ENCODE measurements at regions of chr16 and their contacts with region 1.

Region 1: DNA sequence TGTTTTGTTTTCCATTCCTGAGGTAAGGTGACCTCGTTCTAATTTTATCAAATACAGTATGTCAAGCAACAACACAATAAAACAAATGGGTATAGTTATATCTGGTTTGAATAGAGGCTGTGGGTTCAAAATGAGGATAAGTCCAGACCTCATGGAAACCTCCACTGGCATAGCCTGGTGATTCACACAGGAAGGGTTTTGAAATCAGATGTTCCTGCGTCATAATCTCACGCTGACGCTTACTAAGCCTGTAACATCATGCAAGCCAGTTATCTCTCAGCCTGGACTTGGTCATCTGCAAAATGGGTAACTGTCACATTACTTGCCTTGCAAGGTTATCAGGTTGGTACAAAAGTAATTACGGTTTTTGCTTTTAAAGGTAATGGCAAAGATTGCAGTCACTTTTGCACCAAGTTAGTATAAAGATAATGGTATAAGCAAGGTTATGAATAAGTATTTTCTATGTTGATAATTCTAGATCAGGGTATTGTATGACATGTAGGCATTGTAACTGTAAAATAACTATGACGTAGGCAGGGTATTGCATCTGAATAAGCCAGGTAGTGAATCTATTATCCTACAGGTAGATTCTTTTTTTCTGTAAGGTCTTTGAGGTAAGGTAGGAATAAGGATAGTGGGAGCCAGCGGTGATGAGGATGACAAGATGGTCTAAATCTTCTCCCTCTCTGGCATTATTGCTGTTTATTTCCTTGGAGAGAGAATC is 1056.5 kb upstream of the EEF2KMT start:
- DNase-seq: no peak
- ATAC-seq: no peak
- H3K4me3 ChIP-seq: no peak overlapping the region
- H3K27ac ChIP-seq: no peak overlapping the region
- H3K4me1 ChIP-seq: no peaks in the 10 kb centered on the region
- H3K27me3 ChIP-seq: no peaks in the 10 kb centered on the region
- CTCF ChIP-seq: no peak
- POLR2A ChIP-seq: no peak
- RAD21 ChIP-seq: no peak

Region 2: DNA sequence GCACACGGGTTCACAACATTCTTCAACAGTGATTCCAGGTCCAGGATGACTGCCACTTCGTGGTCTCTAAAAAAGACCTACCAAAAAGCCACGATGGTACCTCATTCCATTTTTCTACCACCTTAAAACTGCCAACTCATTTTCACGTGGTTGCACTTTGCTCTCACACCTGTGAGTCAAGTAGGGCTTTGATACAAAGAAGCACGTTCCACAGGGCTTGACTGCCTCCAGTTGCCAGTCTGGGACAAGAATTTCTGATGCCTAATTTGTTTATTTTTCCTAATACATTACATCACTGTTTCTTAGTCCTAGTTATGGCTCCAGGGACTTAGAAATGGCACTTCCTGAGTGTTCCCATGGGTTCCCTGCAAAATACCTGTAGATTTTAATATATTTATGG is 144.9 kb before region 1 on chr16:
- CTCF ChIA-PET with region 1: no interaction called
- POLR2A ChIA-PET with region 1: no interaction called
- dilution Hi-C with region 1: no loop called
- in situ Hi-C with region 1: no loop called
- intact Hi-C with region 1: no loop called
- DNase-seq: no peak
- ATAC-seq: no peak
- H3K4me3 ChIP-seq: no peak overlapping the region
- H3K27ac ChIP-seq: no peak overlapping the region
- H3K4me1 ChIP-seq: no peaks in the 10 kb centered on the region
- H3K27me3 ChIP-seq: no peaks in the 10 kb centered on the region
- CTCF ChIP-seq: no peak
- POLR2A ChIP-seq: no peak
- RAD21 ChIP-seq: no peak

Region 3: DNA sequence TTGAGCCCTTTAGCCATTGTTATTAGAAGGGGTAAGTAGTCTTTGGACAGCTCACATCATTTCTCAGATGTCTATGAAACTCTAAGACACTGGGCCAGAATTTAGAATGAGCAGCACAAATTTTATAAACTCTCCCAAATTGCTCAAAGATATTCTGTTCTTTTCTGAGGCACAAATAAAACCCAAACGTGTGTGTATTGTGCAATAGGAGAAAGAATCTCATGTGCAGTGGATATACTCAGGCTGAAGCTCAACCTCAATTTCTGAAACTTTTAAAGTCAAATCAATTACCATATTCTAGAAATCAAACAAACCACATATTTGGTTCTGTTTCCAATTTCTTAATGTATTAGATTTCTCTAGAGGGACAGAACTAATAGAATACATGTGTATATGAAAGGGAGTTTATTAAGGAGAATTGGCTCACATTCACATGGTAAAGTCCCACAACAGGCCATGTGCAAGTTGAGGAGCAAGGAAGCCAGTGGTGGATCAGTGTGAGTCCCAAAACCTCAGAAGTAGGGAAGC is 1582.1 kb after region 1 on chr16:
- CTCF ChIA-PET with region 1: no interaction called
- POLR2A ChIA-PET with region 1: interaction called, 10 read pairs
- dilution Hi-C with region 1: no loop called
- in situ Hi-C with region 1: no loop called
- intact Hi-C with region 1: no loop called
- DNase-seq: no peak
- ATAC-seq: no peak
- H3K4me3 ChIP-seq: no peak overlapping the region
- H3K27ac ChIP-seq: no peak overlapping the region
- H3K4me1 ChIP-seq: no peaks in the 10 kb centered on the region
- H3K27me3 ChIP-seq: no peaks in the 10 kb centered on the region
- CTCF ChIP-seq: no peak
- POLR2A ChIP-seq: no peak
- RAD21 ChIP-seq: no peak